Heart left ventricle (tissue), 16 donors: ENCODE measurements at regions of chr6 and their contacts with region 1.

Region 1: DNA sequence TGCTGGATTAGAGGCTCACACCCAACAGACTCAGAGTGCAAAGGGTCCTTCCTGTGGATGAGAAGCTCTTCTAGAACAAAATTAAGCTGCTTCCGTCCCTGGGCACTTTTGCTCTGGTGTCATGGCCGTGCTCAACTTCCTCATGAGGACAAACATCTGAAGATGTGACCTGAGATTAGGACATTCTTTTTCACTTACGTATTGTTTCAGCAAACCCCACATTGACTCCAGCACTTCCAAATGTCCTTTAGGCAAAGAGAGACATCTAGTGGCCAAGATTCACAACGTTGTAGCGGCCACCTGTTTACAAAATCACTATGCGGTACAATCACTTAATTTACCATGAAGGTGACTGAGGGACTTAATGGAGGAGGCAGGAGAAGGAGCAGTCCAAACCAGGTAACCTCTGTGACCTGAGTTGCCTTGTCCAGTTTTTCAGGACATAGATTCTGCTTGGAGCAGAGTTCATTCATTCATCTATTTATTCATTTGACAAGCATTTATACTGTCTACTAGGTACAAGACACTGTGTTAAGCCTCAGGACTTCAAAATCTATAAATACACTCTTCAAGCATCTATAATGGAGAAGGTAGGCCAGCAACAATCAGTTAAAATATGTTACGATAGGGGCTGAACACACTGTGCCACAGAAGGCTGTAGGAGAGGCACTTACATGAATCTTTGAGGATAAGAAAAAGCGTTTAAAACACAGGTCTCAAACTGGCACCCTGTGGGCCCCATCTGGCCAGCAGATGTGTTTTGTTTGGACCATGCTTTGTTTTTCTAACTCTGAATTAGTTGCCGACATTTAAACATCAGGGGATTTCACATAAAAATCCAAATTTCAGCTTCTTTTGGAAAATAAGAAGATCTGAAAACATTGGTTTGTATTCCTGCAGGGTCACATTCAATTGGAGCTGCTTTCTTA is 5.6 kb upstream of the ADGRF1 start:
- DNase-seq: peak in 4 of 5 donors; percentile 35 to 50 (median 44)
- ATAC-seq: peak; percentile 71 to 91 (median 84)
- H3K4me3 ChIP-seq: no peak overlapping the region
- H3K27ac ChIP-seq: peak overlapping the region in 4 of 12 donors; percentile 12 to 54 (median 36)
- H3K4me1 ChIP-seq: peaks cover 0 to 13% (median 5%) of the 10 kb centered on the region in 12 donors
- H3K27me3 ChIP-seq: no peaks in the 10 kb centered on the region
- CTCF ChIP-seq: peak; percentile 48 to 87 (median 78)
- POLR2A ChIP-seq: no peak

Region 2: DNA sequence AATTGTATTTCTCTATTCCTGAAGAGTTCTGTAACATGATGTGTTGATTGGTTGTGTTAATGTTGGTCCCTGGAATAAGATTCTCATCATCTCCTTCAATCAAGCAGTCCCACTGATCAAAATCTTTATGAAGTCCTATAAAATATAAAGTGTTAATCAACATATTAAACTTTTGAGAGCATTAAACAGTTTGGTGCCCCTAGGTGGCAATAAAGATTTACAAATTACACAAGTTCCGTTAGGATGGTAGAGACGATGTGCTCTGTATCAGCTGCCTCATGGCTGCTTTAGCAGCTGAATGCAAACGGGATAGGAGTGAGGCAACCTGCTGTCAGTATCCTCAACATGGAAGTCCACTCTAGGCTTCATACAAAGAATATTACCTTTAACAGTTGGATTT is 343.2 kb before region 1 on chr6:
- intact Hi-C with region 1: loop called in 1 of 10 experiments (anchors 10 kb)
- DNase-seq: no peak
- ATAC-seq: peak in 3 of 4 donors; percentile 41 to 75 (median 56)
- H3K4me3 ChIP-seq: no peak overlapping the region
- H3K27ac ChIP-seq: no peak overlapping the region
- H3K4me1 ChIP-seq: peaks cover 0 to 7% (median 0%) of the 10 kb centered on the region in 12 donors
- H3K27me3 ChIP-seq: no peaks in the 10 kb centered on the region
- CTCF ChIP-seq: peak in 7 of 12 donors; percentile 12 to 34 (median 18)
- POLR2A ChIP-seq: no peak

Region 3: DNA sequence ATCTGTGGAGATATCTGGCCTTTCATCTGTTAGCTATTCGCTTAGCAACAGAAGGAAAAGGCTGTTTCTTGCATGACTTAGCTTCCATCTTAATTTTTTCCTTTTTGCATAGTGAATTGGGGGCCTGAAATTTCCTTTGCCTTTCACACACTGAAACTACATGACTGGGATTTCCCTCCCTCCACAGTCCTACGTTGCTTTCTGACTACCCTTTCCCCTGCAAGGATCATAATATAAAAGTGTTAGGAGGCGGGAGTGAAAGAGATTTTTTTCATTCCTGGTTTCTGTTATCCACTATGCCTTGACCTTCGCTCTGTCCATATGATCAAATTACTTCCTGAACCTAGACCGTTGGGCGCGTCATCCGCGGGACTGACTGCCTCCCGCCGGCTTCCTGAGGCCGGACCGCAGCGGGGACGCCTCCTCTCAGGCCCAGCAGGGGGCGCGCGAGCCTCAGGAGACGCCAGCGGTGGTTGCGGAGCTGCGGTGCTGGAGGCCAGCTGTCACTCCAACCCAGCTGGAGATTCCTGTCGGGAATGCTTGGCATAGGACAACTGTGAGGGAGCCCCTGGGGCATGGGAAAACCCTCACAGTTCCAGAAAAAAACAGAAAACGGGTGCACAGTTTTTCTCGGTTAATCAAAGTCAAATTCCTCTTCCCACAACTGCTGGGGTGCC is 198.9 kb before region 1 on chr6:
- intact Hi-C with region 1: loop called (anchors 1 to 5 kb)
- DNase-seq: peak; percentile 84 to 94 (median 87)
- ATAC-seq: peak; percentile 65 to 96 (median 95)
- H3K4me3 ChIP-seq: peak overlapping the region in 5 of 12 donors; percentile 3 to 32 (median 26)
- H3K27ac ChIP-seq: no peak overlapping the region
- H3K4me1 ChIP-seq: peaks cover 0 to 44% (median 13%) of the 10 kb centered on the region in 12 donors
- H3K27me3 ChIP-seq: no peaks in the 10 kb centered on the region
- CTCF ChIP-seq: peak; percentile 93 to 99 (median 98)
- POLR2A ChIP-seq: no peak

Region 4: DNA sequence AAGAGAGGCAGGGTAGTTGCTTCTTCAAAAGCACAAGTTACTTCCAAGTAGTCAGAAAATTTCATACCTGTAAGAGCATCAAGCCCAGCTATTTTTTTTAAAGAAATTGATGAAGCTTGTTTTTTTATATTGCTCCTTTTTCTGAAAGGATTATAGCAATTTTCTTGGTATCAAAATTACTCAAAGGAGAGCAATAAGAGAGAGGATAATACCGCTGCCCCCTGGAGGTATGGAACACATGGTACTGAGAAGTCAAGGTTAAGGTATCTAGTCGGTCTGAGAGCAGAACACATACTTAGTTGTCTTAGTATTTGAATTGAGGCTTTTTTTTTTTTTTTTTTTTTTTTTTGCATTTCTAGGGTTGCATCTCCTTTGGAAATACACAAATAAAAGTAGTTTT is 185.4 kb before region 1 on chr6:
- intact Hi-C with region 1: loop called in 1 of 10 experiments (anchors 5 kb)
- DNase-seq: no peak
- ATAC-seq: no peak
- H3K4me3 ChIP-seq: no peak overlapping the region
- H3K27ac ChIP-seq: no peak overlapping the region
- H3K4me1 ChIP-seq: no peaks in the 10 kb centered on the region
- H3K27me3 ChIP-seq: no peaks in the 10 kb centered on the region
- CTCF ChIP-seq: no peak
- POLR2A ChIP-seq: no peak

Region 5: GRCh38 chr6:47009566-47009965 is 38.2 kb before region 1 on chr6:
- intact Hi-C with region 1: loop called in 3 of 10 experiments (anchors 5 kb)
- DNase-seq: no peak
- ATAC-seq: no peak
- H3K4me3 ChIP-seq: no peak overlapping the region
- H3K27ac ChIP-seq: no peak overlapping the region
- H3K4me1 ChIP-seq: no peaks in the 10 kb centered on the region
- H3K27me3 ChIP-seq: peaks cover 0 to 7% (median 0%) of the 10 kb centered on the region in 9 donors
- CTCF ChIP-seq: peak in 5 of 12 donors; percentile 5 to 40 (median 11)
- POLR2A ChIP-seq: no peak

Region 6: DNA sequence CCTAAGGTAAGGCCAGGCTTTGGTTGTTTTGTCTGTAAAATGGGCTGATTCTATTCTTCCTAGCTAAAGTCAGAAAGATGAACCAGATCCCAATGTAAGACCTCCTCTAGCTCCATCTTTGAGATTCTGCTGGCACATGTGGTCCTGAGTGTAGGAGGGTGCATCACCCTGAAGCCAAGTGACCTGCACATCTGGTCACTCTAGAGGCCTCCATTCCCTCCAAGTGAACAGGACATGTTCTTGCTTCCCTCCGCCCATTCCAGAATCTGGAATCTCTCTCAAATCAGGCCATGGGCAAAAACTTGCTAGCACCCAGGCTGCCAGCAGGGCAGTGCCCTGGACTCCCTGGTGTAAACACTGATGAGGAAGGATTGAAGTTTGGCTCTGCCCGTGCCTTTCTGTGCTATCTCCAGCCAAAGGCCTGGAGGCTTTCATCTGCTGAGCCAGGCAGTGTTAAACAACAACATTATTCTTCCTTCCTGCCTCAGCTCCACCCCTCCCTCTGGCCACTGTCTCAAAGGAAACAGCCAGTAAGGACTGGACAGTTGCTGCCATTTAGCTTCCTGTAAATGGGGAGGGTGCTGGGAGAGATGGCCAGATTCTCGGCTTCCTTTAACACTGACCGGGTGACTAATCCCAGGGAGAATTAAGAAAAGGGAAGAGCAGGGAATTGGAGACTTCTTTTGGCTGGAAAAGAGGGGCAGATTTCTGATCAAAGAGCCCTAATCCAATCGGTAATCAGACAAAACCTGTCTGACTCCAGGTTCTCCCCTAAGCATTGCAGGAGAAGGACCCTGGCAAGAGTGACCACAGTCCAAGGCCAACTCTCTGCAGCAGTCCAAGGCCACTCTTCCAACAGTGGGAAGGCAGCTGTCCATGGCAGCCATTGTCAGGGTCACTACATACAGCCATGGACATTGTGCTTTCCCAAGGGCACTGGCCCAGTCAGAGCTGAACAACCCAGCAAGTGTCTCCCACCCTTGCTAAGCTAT is 13.9 kb after region 1 on chr6:
- intact Hi-C with region 1: no loop called
- DNase-seq: peak in 4 of 5 donors; percentile 31 to 50 (median 40)
- ATAC-seq: peak in 3 of 4 donors; percentile 76 to 88 (median 80)
- H3K4me3 ChIP-seq: no peak overlapping the region
- H3K27ac ChIP-seq: peak overlapping the region in 7 of 12 donors; percentile 1 to 44 (median 22)
- H3K4me1 ChIP-seq: peaks cover 0 to 11% (median 5%) of the 10 kb centered on the region in 12 donors
- H3K27me3 ChIP-seq: no peaks in the 10 kb centered on the region
- CTCF ChIP-seq: no peak
- POLR2A ChIP-seq: no peak